Left lung (tissue), 14 donors: ENCODE measurements at regions of chr1 and their contacts with region 1.

Region 1: DNA sequence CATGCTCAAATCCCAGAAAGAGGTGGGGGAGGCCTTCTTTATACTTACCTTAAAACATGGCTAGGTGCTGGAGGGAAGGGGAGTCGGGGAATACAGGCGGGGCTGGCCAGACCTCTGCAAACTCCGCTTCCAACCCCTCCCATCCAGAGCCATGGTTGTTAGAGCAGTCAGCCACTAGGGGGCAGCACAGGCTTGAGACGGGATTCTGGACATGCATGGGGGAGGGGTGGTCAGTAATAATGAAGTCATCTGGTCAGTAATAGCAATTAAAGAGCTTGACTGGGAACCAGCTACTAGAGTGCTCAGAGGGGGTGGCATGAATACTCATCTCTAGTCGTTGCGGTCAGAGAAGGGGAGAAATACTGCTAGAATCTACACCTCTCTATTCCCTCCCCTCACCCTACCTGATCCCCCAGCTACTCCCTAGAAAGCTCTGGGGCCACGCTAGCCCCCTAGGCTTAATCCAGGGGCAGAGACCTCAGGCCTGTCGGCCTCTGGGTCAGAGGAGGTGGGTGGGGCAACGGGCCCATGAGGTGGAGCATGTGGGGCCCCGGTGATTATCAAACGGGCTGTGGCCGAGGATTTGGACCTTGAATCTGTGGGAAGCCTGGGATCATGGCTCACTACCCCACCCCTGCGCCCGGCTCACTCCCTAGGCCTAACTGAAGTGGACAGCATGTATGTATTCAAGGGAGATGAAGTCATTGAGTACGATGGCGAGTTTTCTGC is 2.9 kb downstream of the CASQ1 start:
- DNase-seq: peak; percentile 81 to 92 (median 84)
- ATAC-seq: peak; percentile 99
- H3K4me3 ChIP-seq: no peak overlapping the region
- H3K27ac ChIP-seq: no peak overlapping the region
- H3K4me1 ChIP-seq: peaks cover 8 to 13% of the 10 kb centered on the region in 2 donors
- H3K27me3 ChIP-seq: no peaks in the 10 kb centered on the region
- CTCF ChIP-seq: peak; percentile 95 to 98

Region 2: DNA sequence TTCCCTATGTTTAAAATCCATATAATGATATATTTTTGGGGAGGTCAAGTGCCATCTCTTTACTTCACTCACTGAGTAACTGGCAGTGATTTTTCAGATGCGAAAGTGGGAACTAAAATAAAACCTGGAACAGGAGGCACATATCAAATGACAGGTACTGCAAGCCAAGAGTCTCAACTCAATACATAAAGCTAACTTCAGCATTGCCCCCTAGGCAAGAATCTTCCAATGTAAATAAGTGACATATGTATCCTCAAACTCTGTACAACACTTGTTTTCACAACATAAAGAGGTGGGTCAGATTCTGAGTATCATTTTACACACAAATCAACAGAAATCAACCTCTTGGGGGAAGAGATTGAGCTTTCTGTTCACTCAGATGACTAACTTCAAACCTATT is 51.0 kb after region 1 on chr1:
- intact Hi-C with region 1: loop called in 1 of 2 experiments (anchors 10 kb)
- DNase-seq: no peak
- ATAC-seq: no peak
- H3K4me3 ChIP-seq: no peak overlapping the region
- H3K27ac ChIP-seq: no peak overlapping the region
- H3K4me1 ChIP-seq: peaks cover 0 to 5% of the 10 kb centered on the region in 2 donors
- H3K27me3 ChIP-seq: no peaks in the 10 kb centered on the region
- CTCF ChIP-seq: no peak

Region 3: GRCh38 chr1:160291248-160292220 is 98.3 kb after region 1 on chr1:
- intact Hi-C with region 1: loop called in 1 of 2 experiments (anchors 5 kb)
- DNase-seq: peak in 3 of 4 donors; percentile 42 to 74 (median 53)
- ATAC-seq: peak; percentile 97
- H3K4me3 ChIP-seq: no peak overlapping the region
- H3K27ac ChIP-seq: peak overlapping the region in 1 of 2 donors; percentile 21
- H3K4me1 ChIP-seq: no peaks in the 10 kb centered on the region
- H3K27me3 ChIP-seq: no peaks in the 10 kb centered on the region
- CTCF ChIP-seq: peak; percentile 77